ENCODE measurements at regions of chr7 and their contacts with region 1.

Region 1: GRCh38 chr7:66628361-66629140 is at the start of gene KCTD7:
- DNase-seq: peak; percentile 98
- H3K4me3 Mint-ChIP-seq: peak within 1 kb of the TSS; percentile 86
- H3K27ac Mint-ChIP-seq: peak within 1 kb of the TSS; percentile 89
- H3K4me1 Mint-ChIP-seq: peaks cover 42% of the 10 kb centered on the region
- H3K27me3 Mint-ChIP-seq: no peaks in the 10 kb centered on the region
- total RNA-seq, gene KCTD7: 7.4 to 8.2 TPM

Region 2: GRCh38 chr7:66296001-66296521 is 332.5 kb before region 1 on chr7:
- CTCF ChIA-PET with region 1: no interaction called
- POLR2A ChIA-PET with region 1: no interaction called
- intact Hi-C with region 1: no loop called
- DNase-seq: no peak
- H3K4me3 Mint-ChIP-seq: no peak overlapping the region
- H3K27ac Mint-ChIP-seq: no peak overlapping the region
- H3K4me1 Mint-ChIP-seq: no peaks in the 10 kb centered on the region
- H3K27me3 Mint-ChIP-seq: no peaks in the 10 kb centered on the region

Region 3: GRCh38 chr7:66557608-66558143 is 70.9 kb before region 1 on chr7:
- CTCF ChIA-PET with region 1: interaction called, 3 read pairs
- POLR2A ChIA-PET with region 1: no interaction called
- intact Hi-C with region 1: loop called (anchors 2 kb)
- DNase-seq: peak; percentile 78
- H3K4me3 Mint-ChIP-seq: no peak overlapping the region
- H3K27ac Mint-ChIP-seq: no peak overlapping the region
- H3K4me1 Mint-ChIP-seq: no peaks in the 10 kb centered on the region
- H3K27me3 Mint-ChIP-seq: no peaks in the 10 kb centered on the region

Region 4: GRCh38 chr7:66591799-66592596 is 36.6 kb before region 1 on chr7:
- CTCF ChIA-PET with region 1: no interaction called
- POLR2A ChIA-PET with region 1: interaction called, 4 read pairs
- intact Hi-C with region 1: loop called (anchors 1 kb)
- DNase-seq: peak; percentile 95
- H3K4me3 Mint-ChIP-seq: peak overlapping the region; percentile 96
- H3K27ac Mint-ChIP-seq: peak overlapping the region; percentile 92
- H3K4me1 Mint-ChIP-seq: peaks cover 44% of the 10 kb centered on the region
- H3K27me3 Mint-ChIP-seq: no peaks in the 10 kb centered on the region

Region 5: DNA sequence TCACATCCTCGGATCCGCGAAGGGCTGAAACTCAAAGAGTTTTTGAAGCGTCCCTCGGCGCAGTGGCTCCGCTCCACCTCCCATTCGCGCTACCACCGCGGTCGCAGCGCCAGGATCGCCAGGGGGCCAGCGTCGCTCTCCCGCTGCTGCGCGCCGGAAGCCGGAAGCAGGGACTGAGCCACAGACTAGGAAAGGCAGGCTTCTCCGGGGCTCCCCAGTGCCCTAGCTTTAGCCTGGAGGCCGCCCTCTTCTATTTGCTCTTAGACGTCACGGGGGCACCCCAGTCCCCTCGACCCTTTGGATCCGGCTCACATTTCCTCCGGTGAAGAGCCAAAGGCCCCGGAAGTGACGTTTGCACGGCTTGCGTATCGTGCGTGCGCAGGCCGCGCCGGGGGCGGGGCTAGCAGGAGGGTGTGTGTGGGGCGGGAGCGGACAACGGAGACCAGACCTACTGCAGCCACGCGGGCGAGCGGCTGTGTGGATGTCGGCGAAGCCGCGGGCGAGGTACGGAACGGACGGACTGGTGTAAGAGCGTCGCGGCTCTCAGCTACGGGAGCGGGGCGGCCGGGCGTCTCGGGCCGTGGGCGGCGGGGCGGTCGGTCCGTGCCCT is 25.7 kb after region 1 on chr7:
- CTCF ChIA-PET with region 1: interaction called, 3 read pairs
- POLR2A ChIA-PET with region 1: interaction called, 11 read pairs
- intact Hi-C with region 1: loop called (anchors 1 kb)
- DNase-seq: peak; percentile 98
- H3K4me3 Mint-ChIP-seq: peak overlapping the region; percentile 94
- H3K27ac Mint-ChIP-seq: peak overlapping the region; percentile 96
- H3K4me1 Mint-ChIP-seq: peaks cover 23% of the 10 kb centered on the region
- H3K27me3 Mint-ChIP-seq: no peaks in the 10 kb centered on the region

Region 6: GRCh38 chr7:66681491-66682349 is 53.2 kb after region 1 on chr7:
- CTCF ChIA-PET with region 1: no interaction called
- POLR2A ChIA-PET with region 1: interaction called, 5 read pairs
- intact Hi-C with region 1: loop called (anchors 1 kb)
- DNase-seq: peak; percentile 96
- H3K4me3 Mint-ChIP-seq: peak overlapping the region; percentile 90
- H3K27ac Mint-ChIP-seq: peak overlapping the region; percentile 95
- H3K4me1 Mint-ChIP-seq: peaks cover 37% of the 10 kb centered on the region
- H3K27me3 Mint-ChIP-seq: no peaks in the 10 kb centered on the region

Region 7: GRCh38 chr7:66740302-66740979 is 111.9 kb after region 1 on chr7 and contains the start of gene RABGEF1:
- CTCF ChIA-PET with region 1: no interaction called
- POLR2A ChIA-PET with region 1: interaction called, 5 read pairs
- intact Hi-C with region 1: loop called (anchors 1 kb)
- DNase-seq: peak; percentile 98
- H3K4me3 Mint-ChIP-seq: peak within 1 kb of the TSS; percentile 97
- H3K27ac Mint-ChIP-seq: peak within 1 kb of the TSS; percentile 93
- H3K4me1 Mint-ChIP-seq: peaks cover 32% of the 10 kb centered on the region
- H3K27me3 Mint-ChIP-seq: no peaks in the 10 kb centered on the region
- total RNA-seq, gene RABGEF1: 18.8 to 20.7 TPM